Astrocyte of the cerebellum (primary cell): ENCODE measurements at regions of chr14 and their contacts with region 1.

Region 1: GRCh38 chr14:104293851-104294627 is 155.7 kb downstream of the KIF26A start:
- DNase-seq: no peak
- H3K4me3 ChIP-seq: no peak overlapping the region
- CTCF ChIP-seq: no peak

Region 2: GRCh38 chr14:104341532-104342434 is 47.7 kb after region 1 on chr14:
- in situ Hi-C with region 1: loop called (anchors 5 kb)
- DNase-seq: no peak
- H3K4me3 ChIP-seq: no peak overlapping the region
- CTCF ChIP-seq: no peak

Region 3: GRCh38 chr14:104399432-104400151 is 105.6 kb after region 1 on chr14:
- in situ Hi-C with region 1: loop called (anchors 5 kb)
- DNase-seq: no peak
- H3K4me3 ChIP-seq: no peak overlapping the region
- CTCF ChIP-seq: no peak